ENCODE measurements at regions of chr15 and their contacts with region 1.

Region 1: DNA sequence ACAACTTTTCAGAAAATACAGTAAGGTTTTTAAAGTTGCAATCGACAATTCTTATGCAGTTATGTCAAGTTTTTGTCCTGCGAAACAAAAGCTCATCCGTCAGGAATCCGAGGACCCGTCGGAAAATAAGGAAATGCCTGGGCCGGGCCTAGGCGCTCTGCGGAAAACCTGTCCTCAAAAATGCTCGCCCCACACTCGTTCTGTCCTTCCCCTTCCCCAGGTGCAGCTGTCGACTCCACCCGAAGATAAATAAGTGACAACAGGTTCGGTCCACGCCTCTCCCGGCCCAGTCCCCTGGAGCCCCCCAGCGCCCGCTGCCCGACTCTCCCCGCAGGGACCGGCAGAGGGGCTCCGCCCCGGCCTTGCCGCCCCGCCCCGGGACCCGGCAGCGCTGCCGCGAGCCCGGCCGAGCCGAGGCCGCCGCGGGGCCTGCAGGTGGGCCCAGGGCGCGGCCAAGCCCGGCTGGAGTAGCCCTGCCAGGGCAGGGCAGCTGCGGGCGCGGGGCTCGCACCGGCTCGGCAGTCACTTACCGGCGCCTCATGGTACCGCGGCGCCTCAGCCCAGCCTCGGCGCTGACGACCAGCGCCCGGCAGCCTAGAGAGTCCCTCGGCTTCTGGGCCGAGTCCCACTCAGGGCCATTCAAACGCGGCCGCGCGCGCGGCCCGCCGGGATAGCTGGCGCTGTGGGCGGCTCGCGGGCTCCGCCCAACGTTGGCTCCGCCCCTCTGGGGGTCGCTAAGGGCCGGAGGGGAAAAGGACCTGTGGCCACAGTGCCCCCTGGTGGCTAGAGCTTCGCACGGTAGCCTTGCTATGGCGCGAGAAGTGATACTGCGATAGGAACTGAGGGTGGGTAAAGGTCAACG is at the start of gene KATNBL1:
- DNase-seq: peak; percentile 94 to 97 (median 95)
- H3K4me3 ChIP-seq: peak within 1 kb of the TSS; percentile 74 to 97 (median 83)
- H3K27ac ChIP-seq: peak within 1 kb of the TSS; percentile 87 to 94
- H3K4me1 ChIP-seq: peaks cover 5 to 11% (median 6%) of the 10 kb centered on the region in 4 experiments
- H3K27me3 ChIP-seq: no peaks in the 10 kb centered on the region

Region 2: DNA sequence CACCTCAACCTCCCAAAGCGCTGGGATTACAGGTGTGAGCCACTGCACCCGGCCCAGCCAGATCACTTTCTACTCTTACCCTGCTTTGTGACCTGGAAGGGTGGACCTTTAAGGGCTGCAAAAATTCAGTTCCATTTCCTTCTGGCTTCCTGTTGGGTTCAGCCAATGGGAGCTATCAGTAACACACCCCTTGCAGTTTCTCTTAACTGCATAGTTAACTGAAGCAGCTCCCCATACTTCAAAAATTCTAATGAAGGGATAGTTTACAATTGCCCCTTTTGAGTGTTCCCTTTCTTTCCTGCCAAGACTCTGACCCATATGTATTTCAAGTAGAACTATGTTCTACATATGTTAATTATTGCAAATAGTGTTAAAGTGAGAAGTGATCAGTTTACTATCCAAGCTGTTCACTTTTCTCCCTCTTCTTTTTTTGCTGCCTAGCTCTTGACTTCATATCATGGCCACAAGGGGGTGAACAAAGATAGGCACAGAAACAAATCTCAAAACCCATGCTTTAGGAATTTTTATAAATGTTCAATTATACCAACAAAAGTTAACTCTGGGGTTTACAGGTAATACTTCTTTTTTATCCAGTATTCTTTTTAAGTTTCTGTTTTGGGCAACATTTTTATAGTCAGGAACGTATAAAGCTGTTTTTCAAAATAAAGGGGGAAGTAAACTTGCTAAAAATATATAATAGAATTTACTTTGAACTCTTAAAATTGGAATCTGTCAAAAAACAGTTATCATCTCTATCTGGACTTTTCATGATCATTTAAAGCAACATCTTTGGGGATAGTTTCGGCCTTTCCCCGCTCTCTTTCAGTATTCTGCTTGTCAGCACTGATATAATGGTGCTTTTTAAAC is 99.6 kb before region 1 on chr15:
- CTCF ChIA-PET with region 1: interaction called, 43 read pairs
- POLR2A ChIA-PET with region 1: no interaction called
- DNase-seq: peak; percentile 45 to 66 (median 56)
- H3K4me3 ChIP-seq: no peak overlapping the region
- H3K27ac ChIP-seq: no peak overlapping the region
- H3K4me1 ChIP-seq: peaks cover 0 to 2% (median 0%) of the 10 kb centered on the region in 4 experiments
- H3K27me3 ChIP-seq: no peaks in the 10 kb centered on the region

Region 3: GRCh38 chr15:34188711-34189110 is 20.9 kb before region 1 on chr15:
- CTCF ChIA-PET with region 1: no interaction called
- POLR2A ChIA-PET with region 1: no interaction called
- DNase-seq: no peak
- H3K4me3 ChIP-seq: no peak overlapping the region
- H3K27ac ChIP-seq: no peak overlapping the region
- H3K4me1 ChIP-seq: no peaks in the 10 kb centered on the region
- H3K27me3 ChIP-seq: no peaks in the 10 kb centered on the region

Region 4: GRCh38 chr15:34366271-34367065 is 156.8 kb after region 1 on chr15:
- CTCF ChIA-PET with region 1: no interaction called
- POLR2A ChIA-PET with region 1: no interaction called
- DNase-seq: peak in 2 of 3 donors; percentile 29 to 40
- H3K4me3 ChIP-seq: peak overlapping the region; percentile 44 to 98 (median 90)
- H3K27ac ChIP-seq: peak overlapping the region in 1 of 2 experiments; percentile 29
- H3K4me1 ChIP-seq: peaks cover 8 to 27% (median 20%) of the 10 kb centered on the region in 4 experiments
- H3K27me3 ChIP-seq: no peaks in the 10 kb centered on the region